ENCODE measurements at regions of chr14 and their contacts with region 1.

Region 1: DNA sequence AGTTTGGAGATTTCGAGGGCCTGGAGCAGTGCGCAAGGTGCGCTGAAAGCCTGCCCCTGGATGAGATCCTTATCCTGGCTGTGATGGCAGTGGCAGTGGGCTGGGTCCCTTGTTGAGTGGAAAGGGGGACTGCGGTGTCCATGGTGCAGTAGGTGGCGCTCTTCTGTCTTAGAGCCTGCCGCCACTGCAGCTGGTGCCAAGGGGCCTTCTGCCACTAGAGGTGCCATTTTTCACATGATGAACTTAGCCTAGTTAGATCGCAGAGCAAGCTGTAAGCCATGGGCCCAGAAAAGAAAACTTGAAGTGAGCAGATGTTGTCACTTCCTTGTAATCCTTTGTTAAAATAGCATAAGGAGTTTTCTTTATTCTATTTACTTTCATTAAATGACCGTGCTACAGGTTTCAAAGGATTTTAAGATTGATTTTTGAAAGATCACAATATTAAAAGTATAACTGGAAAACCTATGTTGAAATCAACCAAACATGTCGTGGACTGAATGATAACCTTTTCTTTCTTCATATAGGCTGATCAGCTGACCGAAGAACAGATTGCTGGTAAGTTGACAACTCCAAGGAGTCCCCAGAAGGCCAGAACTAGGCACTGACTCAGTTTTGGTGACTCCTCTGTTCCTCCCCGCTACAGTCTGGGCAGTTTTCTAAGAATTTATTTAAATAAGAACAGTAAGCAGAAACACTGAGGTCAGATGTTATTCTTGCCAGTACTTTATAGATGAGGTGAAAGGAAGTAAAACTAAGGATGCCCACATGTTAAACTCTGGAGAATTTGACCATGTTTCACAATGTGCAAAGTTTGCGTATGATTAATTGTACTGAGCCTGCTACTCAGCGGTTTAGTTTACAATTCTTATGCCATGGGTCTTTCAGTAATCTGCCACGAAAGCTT is 3.0 kb downstream of the CALM1 start:
- DNase-seq: peak; percentile 63
- ATAC-seq: peak; percentile 46
- H3K4me3 Mint-ChIP-seq: peak overlapping the region; percentile 91
- H3K27ac Mint-ChIP-seq: peak overlapping the region; percentile 98
- H3K4me1 Mint-ChIP-seq: peaks cover 47% of the 10 kb centered on the region
- H3K27me3 Mint-ChIP-seq: no peaks in the 10 kb centered on the region
- CTCF ChIP-seq: peak; percentile 78

Region 2: DNA sequence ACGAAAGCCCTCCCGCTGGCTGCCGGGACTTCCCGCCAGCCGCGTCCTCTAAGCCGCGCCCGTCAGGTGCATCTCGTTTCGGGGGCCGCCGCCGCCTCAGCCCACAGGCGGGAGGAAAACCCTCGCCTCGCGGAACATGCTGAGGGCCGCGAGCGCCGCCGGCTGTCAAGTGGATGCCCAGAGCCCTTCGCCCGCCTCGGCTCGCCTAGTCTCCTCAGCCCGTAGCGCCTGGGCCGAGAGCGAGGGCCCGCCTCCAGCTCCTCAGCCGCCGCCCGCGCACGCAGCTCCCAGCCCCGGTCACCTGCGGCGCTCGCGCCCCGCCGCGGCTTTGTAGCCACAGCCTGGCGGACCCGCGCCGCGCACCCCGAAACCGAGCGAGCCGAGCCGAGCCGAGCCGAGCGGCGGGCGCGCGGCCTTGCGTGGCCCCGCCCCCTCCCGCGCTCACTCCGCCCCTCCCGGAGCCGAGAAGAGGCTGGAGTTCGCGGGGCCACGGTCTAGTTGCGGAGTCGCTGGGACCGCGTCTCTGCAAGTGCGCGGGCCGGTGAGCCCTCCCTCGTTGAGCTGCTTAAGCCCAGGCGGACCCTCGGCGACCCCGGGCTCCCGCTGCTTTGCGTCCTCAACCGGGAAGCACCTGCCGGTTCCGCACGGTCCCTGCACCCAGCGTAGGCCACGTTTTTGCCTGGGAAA is 1607.1 kb before region 1 on chr14 and contains the start of gene EML5:
- CTCF ChIA-PET with region 1: no interaction called
- POLR2A ChIA-PET with region 1: no interaction called
- intact Hi-C with region 1: loop called (anchors 2 kb)
- DNase-seq: peak; percentile 81
- ATAC-seq: peak; percentile 86
- H3K4me3 Mint-ChIP-seq: peak within 1 kb of the TSS; percentile 89
- H3K27ac Mint-ChIP-seq: peak within 1 kb of the TSS; percentile 71
- H3K4me1 Mint-ChIP-seq: peaks cover 24% of the 10 kb centered on the region
- H3K27me3 Mint-ChIP-seq: no peaks in the 10 kb centered on the region
- CTCF ChIP-seq: no peak
- total RNA-seq, gene EML5: 3.8 and 5.0 TPM in 2 replicates

Region 3: GRCh38 chr14:89589400-89590118 is 810.2 kb before region 1 on chr14:
- CTCF ChIA-PET with region 1: no interaction called
- POLR2A ChIA-PET with region 1: no interaction called
- intact Hi-C with region 1: no loop called
- DNase-seq: peak; percentile 24
- ATAC-seq: peak; percentile 84
- H3K4me3 Mint-ChIP-seq: peak overlapping the region; percentile 55
- H3K27ac Mint-ChIP-seq: peak overlapping the region; percentile 85
- H3K4me1 Mint-ChIP-seq: peaks cover 45% of the 10 kb centered on the region
- H3K27me3 Mint-ChIP-seq: no peaks in the 10 kb centered on the region
- CTCF ChIP-seq: no peak

Region 4: DNA sequence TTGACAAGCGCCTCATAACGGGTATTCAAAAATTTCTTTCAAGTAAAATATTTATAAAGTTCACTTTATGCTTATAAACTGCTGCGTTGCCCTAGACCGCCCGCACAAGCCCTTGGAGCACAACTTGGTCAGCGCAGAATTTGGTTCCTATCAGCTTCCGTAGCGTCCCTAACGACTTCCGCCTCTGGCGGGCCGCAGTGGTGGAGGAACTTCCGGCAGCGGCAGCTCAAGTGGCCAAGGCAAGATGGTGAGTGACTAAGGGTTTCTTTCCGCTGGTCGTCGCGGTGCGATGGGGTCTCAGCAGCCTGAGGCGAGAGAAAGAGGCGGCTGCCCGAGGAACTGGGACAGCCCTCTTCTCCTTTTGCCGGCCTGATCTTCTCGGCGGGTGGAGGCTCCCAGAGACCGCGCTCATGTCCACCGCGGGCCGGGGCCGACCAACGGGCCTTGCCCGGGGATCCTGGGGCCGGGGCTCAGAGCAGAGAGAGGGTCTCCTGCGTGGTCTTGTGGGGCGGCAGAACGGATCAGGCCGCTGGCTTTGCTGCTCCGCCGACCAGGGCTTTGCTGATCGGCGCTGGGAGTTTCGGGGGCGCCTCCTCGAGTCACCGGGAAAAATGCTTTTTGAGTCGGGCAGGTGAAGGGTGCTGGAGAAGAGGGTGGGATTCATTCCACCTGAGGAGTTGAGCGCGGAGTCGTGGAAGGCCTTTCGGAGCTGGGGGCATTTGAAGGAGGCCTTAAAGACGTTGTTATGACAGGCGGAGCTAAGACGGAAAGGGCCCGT is 143.2 kb before region 1 on chr14 and contains the start of gene PSMC1:
- CTCF ChIA-PET with region 1: interaction called, 4 read pairs
- POLR2A ChIA-PET with region 1: interaction called, 13 read pairs
- intact Hi-C with region 1: loop called (anchors 1 kb)
- DNase-seq: peak; percentile 76
- ATAC-seq: peak; percentile 94
- H3K4me3 Mint-ChIP-seq: peak within 1 kb of the TSS; percentile 98
- H3K27ac Mint-ChIP-seq: peak within 1 kb of the TSS; percentile 92
- H3K4me1 Mint-ChIP-seq: peaks cover 40% of the 10 kb centered on the region
- H3K27me3 Mint-ChIP-seq: no peaks in the 10 kb centered on the region
- CTCF ChIP-seq: no peak
- total RNA-seq, gene PSMC1: 101 and 102 TPM in 2 replicates

Region 5: DNA sequence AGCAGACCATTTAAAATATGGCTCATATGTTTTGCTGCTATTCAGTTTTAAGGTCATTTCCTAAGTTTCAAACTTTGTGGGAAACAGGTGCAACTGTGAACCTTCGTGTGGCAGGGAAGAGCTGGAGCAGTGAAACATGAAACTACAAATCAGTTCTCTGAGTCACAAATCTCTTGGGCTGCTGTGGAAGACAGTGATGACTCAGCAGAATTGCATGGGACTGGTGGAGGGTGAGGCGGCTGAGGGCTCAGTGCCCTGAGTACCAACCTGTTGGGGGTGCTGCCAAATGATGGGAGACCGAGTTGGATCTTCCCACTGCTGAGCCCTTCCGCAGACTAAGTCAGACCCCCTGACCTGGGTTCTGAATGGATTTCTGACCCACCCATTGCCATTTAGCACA is 11.4 kb before region 1 on chr14:
- CTCF ChIA-PET with region 1: interaction called, 14 read pairs
- POLR2A ChIA-PET with region 1: interaction called, 492 read pairs
- intact Hi-C with region 1: loop called (anchors 1 kb)
- DNase-seq: no peak
- ATAC-seq: no peak
- H3K4me3 Mint-ChIP-seq: no peak overlapping the region
- H3K27ac Mint-ChIP-seq: no peak overlapping the region
- H3K4me1 Mint-ChIP-seq: no peaks in the 10 kb centered on the region
- H3K27me3 Mint-ChIP-seq: no peaks in the 10 kb centered on the region
- CTCF ChIP-seq: no peak

Region 6: DNA sequence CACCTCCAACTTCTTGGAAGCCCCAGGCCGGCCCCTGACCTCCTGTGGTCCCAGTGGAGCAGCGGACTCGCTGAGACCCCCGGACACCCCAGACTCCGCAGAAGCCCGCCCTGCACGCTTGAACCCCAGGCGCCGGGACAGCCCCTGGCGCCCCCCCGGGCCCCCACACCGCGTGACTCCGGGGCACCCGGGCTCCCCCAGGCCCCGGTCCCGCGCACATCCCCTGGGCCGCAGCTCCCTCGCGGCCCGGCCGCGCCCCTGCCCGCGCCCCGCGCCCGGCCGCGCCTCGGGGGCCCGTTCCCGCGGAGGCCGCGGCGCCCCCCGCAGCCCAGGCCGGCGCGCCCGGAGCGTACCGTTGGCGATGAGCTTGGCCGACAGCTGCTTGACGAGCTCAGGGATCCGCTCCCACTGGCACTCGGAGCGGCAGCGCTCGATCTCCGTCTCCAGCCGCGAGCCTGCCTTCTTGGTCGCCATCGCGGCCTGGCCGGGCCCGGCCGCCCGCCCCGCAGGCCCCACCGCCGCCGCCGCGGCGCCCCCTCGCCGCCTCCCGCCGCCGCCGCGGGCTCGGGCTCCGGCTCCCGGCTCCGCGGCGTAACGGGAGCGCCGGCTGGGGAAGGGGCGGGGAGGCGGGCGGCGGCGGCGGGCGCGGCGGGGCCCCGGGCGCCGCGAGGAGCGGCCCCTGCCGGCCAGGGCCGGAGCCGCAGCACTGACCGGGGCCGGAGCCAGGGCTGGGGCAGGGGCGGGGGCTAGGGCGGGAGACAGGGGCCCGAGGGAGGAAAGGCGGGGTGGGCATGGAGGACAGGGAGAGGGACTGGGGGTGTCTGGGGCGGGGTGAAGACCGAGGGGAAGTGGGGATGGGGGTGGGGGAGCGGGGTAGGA is 416.3 kb after region 1 on chr14 and contains the start of gene TTC7B:
- CTCF ChIA-PET with region 1: no interaction called
- POLR2A ChIA-PET with region 1: no interaction called
- intact Hi-C with region 1: loop called (anchors 1 kb)
- DNase-seq: peak; percentile 50
- ATAC-seq: peak; percentile 93
- H3K4me3 Mint-ChIP-seq: peak within 1 kb of the TSS; percentile 69
- H3K27ac Mint-ChIP-seq: peak within 1 kb of the TSS; percentile 19
- H3K4me1 Mint-ChIP-seq: no peaks in the 10 kb centered on the region
- H3K27me3 Mint-ChIP-seq: peaks cover 11% of the 10 kb centered on the region
- CTCF ChIP-seq: no peak
- total RNA-seq, gene TTC7B: 1.9 and 2.5 TPM in 2 replicates

Region 7: DNA sequence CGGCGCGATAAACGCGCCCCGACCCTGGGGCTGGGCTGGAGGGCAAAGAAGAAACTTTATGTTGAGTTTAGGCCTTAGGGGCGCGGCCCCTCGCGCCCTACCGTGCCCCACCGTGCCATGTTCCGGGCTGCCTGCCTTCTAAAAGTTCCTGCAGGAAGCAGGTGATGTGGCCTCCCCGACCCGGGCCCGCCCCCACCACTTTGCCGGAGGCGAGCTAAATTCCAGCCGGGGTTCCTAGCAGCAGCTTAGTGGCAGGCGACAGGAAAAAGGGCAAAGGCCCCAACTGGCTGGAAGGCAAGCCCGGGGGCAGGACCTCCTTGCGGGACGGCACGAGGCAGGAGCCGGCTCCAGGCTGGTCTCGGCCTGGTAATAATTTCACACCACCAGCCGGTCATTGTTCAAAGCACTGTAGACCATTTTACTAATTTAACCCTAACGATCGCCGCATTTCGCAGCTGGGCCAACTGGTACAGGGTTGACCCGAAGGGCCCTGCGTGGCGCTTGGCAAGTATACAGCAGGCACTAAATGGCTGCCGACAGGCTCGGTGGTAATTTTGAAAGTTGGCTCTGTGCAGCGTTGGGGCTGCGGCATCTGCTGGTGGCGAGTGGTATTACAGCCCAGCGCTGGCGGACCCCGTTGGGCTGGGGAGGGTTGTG is 1018.7 kb after region 1 on chr14:
- CTCF ChIA-PET with region 1: no interaction called
- POLR2A ChIA-PET with region 1: no interaction called
- intact Hi-C with region 1: loop called (anchors 2 kb)
- DNase-seq: peak; percentile 84
- ATAC-seq: peak; percentile 37
- H3K4me3 Mint-ChIP-seq: peak overlapping the region; percentile 81
- H3K27ac Mint-ChIP-seq: peak overlapping the region; percentile 93
- H3K4me1 Mint-ChIP-seq: peaks cover 42% of the 10 kb centered on the region
- H3K27me3 Mint-ChIP-seq: no peaks in the 10 kb centered on the region
- CTCF ChIP-seq: peak; percentile 36